ENCODE measurements at regions of chr19 and their contacts with region 1.

Region 1: DNA sequence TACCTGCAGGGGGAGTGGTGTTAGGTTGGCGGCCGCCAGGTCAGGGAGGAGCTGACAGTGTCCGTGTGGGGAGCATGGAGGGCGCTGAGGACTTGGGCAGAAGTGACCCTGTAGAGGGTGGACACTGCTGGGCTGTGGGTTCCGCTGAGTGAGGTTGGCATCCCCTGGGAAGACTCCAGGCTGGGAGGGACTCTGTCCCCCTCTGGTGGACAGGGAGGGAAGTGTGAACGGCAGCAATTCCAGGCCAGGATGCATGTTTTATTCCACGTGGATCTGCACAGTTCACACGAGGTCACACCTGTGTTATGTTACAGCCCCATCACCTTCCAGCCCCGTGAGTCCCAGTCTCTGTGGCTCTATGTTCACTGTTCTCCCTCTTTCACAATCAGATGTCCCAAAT is 1.7 kb upstream of the PSG1 start:
- DNase-seq: no peak
- H3K4me3 ChIP-seq: no peak overlapping the region
- H3K27ac ChIP-seq: no peak overlapping the region
- H3K27me3 ChIP-seq: no peaks in the 10 kb centered on the region
- CTCF ChIP-seq: peak; percentile 35

Region 2: DNA sequence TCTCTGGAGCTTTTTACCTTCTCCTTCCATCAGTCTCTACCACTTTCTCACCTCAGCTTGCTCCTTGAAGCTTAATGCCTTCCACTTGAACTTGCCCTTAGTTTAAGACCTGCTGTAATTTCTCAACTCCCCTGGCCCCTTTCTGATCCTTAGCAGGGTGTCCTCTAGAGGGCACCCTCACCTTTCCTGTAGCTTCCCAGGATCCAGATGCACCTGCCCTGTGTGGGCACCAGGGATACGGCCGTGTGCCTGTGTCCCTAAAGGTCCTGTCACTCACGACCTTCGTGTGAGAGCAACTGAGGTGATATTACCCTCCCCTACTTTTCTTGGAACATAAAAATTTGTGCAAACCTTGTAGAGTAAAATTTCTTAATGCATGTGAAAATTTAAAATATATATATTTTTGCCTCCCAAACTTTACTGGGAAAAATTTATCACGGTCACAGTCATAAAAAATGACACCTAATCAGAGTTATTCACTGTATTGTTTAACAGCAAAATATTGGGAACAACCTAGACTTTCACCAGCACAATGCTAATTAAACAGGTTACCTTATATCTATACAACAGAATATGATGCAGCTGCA is 187.4 kb before region 1 on chr19:
- CTCF ChIA-PET with region 1: interaction called, 10 read pairs
- POLR2A ChIA-PET with region 1: no interaction called
- DNase-seq: peak; percentile 2
- H3K4me3 ChIP-seq: no peak overlapping the region
- H3K27ac ChIP-seq: no peak overlapping the region
- H3K27me3 ChIP-seq: peaks cover 5% of the 10 kb centered on the region
- CTCF ChIP-seq: peak; percentile 82

Region 3: DNA sequence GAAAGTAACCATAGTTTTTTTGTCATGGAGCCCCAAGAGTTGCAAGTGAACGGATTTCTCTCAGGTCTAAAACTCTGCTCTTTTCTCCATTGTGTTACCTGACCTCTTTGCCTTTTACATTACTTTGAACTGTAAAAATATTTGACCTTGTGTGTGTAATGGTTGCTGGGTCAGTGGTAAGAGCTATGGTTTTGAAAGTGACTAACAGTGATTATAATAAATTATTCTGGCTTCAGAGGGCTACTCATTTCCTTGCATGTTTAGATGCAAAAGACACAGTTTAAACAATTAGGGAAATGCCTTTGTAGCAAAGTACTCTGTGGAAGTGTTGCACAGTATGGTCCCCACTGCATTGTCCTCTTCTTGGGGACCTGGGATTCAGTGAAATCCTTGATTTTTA is 86.5 kb before region 1 on chr19:
- CTCF ChIA-PET with region 1: interaction called, 17 read pairs
- POLR2A ChIA-PET with region 1: no interaction called
- DNase-seq: no peak
- H3K4me3 ChIP-seq: no peak overlapping the region
- H3K27ac ChIP-seq: no peak overlapping the region
- H3K27me3 ChIP-seq: no peaks in the 10 kb centered on the region
- CTCF ChIP-seq: no peak

Region 4: DNA sequence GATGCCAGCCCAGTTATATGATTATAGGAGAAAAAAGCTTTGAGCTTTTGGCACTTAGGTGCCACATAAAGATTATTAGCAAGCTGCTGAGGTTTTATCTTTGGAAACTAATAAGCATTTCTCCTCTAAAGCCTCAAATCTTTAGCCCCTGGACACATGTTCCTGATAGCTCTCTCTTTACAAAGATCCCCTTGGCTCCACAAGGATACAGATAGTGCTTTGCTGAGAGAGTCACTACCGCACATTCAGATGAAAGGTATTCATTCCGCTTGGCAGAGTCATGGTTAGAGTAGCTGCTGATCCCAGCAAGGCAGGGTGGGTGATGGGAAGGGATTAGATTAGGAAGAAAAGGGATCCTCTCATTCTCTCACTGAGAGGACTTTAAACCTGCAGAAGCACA is 83.9 kb after region 1 on chr19:
- CTCF ChIA-PET with region 1: no interaction called
- POLR2A ChIA-PET with region 1: no interaction called
- DNase-seq: peak; percentile 30
- H3K4me3 ChIP-seq: no peak overlapping the region
- H3K27ac ChIP-seq: peak overlapping the region; percentile 2
- H3K27me3 ChIP-seq: no peaks in the 10 kb centered on the region
- CTCF ChIP-seq: no peak